Activated CD4-positive, alpha-beta T cell treated with anti-CD3 and anti-CD28 coated beads, Interleukin-2, amount 10 ng/mL, durations not matched to agents 24 days and 14 days (primary cell): ENCODE measurements at regions of chr1 and their contacts with region 1.

Region 1: DNA sequence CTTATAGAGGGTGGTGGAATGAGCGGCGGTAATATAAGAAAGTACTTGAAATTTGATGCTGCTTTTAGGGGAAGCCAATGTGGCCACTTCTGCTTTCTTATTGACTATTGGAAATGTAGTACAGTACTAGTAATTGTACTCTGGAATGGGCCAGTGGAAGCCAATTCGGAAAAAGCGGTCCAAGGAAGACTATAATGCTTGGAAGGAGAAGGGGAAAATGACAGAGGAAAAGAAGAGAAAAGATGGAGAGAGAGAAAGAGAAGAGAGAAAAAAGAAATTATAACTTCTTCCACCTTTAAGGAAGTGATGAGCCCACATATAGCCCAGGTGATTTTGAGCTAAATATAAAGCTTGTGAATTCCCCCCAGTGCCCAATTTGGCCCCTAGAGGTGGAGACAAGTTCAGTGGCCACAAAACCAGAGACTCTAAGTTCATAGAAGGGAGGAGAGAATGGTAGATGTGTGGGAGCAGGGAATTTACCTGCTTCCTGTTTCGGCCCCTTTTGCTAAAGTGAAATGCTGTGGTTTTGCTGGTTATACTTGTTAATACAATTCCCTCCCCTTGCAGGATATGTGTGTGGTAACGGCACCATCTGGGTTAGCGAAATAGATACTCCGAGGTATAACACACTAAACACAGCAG is 35.7 kb upstream of the DUSP10 start:
- DNase-seq: peak; percentile 87
- H3K4me3 Mint-ChIP-seq: peak overlapping the region; percentile 68
- H3K27ac Mint-ChIP-seq: peak overlapping the region; percentile 90
- H3K4me1 Mint-ChIP-seq: peaks cover 79% of the 10 kb centered on the region
- H3K27me3 Mint-ChIP-seq: no peaks in the 10 kb centered on the region

Region 2: GRCh38 chr1:221435504-221435904 is 342.0 kb before region 1 on chr1:
- intact Hi-C with region 1: loop called (anchors 1 kb)
- DNase-seq: peak; percentile 67
- H3K4me3 Mint-ChIP-seq: no peak overlapping the region
- H3K27ac Mint-ChIP-seq: no peak overlapping the region
- H3K4me1 Mint-ChIP-seq: peaks cover 22% of the 10 kb centered on the region
- H3K27me3 Mint-ChIP-seq: peaks cover 11% of the 10 kb centered on the region

Region 3: DNA sequence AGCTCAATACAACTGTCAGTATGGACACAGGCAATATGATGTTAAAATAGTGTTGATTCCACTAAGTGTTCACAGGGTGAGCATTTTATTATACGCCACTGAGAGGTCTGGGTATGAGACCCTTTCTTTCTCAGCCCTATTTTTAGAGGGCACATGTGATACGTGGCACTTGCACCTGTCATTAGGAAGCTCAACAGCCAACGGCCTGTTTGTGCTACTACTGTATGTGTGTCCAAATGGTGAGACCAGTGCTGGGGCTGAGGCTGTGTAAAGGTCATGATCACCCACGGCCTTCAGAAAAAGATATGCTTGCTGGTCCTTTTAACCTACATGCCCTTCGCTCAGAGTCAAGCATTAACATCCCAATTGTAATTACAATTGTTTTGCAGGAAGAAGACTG is 211.8 kb before region 1 on chr1:
- intact Hi-C with region 1: no loop called
- DNase-seq: no peak
- H3K4me3 Mint-ChIP-seq: no peak overlapping the region
- H3K27ac Mint-ChIP-seq: no peak overlapping the region
- H3K4me1 Mint-ChIP-seq: no peaks in the 10 kb centered on the region
- H3K27me3 Mint-ChIP-seq: peaks cover 20% of the 10 kb centered on the region

Region 4: GRCh38 chr1:221725735-221726672 is 51.5 kb before region 1 on chr1:
- intact Hi-C with region 1: loop called (anchors 1 kb)
- DNase-seq: no peak
- H3K4me3 Mint-ChIP-seq: peak overlapping the region; percentile 65
- H3K27ac Mint-ChIP-seq: peak overlapping the region; percentile 93
- H3K4me1 Mint-ChIP-seq: peaks cover 71% of the 10 kb centered on the region
- H3K27me3 Mint-ChIP-seq: no peaks in the 10 kb centered on the region

Region 5: DNA sequence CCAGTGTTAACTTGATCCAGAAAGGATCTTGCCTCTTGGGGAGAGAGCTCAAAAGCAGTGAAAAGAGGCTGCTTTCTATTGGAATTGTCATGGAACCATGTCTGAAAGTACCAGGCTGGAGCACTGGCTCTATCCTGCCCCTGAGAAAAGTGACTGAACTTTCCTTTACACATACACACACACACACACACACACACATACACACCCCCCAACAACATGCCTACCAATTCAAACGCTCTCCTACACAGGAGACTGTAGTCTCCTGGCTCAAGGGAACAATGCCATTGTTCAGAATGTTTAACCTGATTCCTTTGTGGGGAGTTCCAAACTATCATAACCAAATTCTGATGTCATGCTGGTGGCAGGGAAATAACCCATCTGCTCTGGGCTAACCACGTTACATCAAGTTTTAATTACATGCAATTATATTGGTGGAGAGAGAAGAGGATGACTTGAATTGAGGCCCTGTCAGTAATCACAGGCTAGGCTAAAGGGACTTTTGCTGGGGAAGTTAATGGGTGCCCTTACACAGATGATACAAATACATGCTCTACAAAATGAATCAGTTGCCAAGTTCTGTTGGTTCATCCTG is 16.6 kb after region 1 on chr1:
- intact Hi-C with region 1: loop called (anchors 1 kb)
- DNase-seq: peak; percentile 77
- H3K4me3 Mint-ChIP-seq: peak overlapping the region; percentile 45
- H3K27ac Mint-ChIP-seq: peak overlapping the region; percentile 90
- H3K4me1 Mint-ChIP-seq: peaks cover 36% of the 10 kb centered on the region
- H3K27me3 Mint-ChIP-seq: no peaks in the 10 kb centered on the region

Region 6: GRCh38 chr1:221829327-221830015 is 51.9 kb after region 1 on chr1:
- intact Hi-C with region 1: loop called (anchors 1 kb)
- DNase-seq: peak; percentile 84
- H3K4me3 Mint-ChIP-seq: peak overlapping the region; percentile 73
- H3K27ac Mint-ChIP-seq: peak overlapping the region; percentile 90
- H3K4me1 Mint-ChIP-seq: peaks cover 67% of the 10 kb centered on the region
- H3K27me3 Mint-ChIP-seq: no peaks in the 10 kb centered on the region

Region 7: GRCh38 chr1:221878134-221878533 is 100.6 kb after region 1 on chr1:
- intact Hi-C with region 1: loop called (anchors 2 kb)
- DNase-seq: no peak
- H3K4me3 Mint-ChIP-seq: no peak overlapping the region
- H3K27ac Mint-ChIP-seq: no peak overlapping the region
- H3K4me1 Mint-ChIP-seq: peaks cover 10% of the 10 kb centered on the region
- H3K27me3 Mint-ChIP-seq: peaks cover 2% of the 10 kb centered on the region

Region 8: GRCh38 chr1:222654849-222655248 is 877.3 kb after region 1 on chr1:
- intact Hi-C with region 1: loop called (anchors 5 kb)
- DNase-seq: peak; percentile 92
- H3K4me3 Mint-ChIP-seq: peak overlapping the region; percentile 69
- H3K27ac Mint-ChIP-seq: peak overlapping the region; percentile 86
- H3K4me1 Mint-ChIP-seq: peaks cover 51% of the 10 kb centered on the region
- H3K27me3 Mint-ChIP-seq: no peaks in the 10 kb centered on the region